ENCODE measurements at regions of chr13 and their contacts with region 1.

Region 1: GRCh38 chr13:98201984-98202383 is 24.9 kb upstream of the RNF113B start:
- DNase-seq: peak in 1 of 2 donors; percentile 28
- ATAC-seq: peak in 1 of 8 donors; percentile 45
- H3K4me3 ChIP-seq: no peak overlapping the region
- H3K27ac ChIP-seq: no peak overlapping the region
- H3K4me1 ChIP-seq: peaks cover 0 to 23% (median under 1%) of the 10 kb centered on the region in 9 donors
- H3K27me3 ChIP-seq: no peaks in the 10 kb centered on the region
- CTCF ChIP-seq: no peak

Region 2: GRCh38 chr13:98180092-98180491 is 21.9 kb before region 1 on chr13:
- intact Hi-C with region 1: loop called in 1 of 10 experiments (anchors 2 kb)
- DNase-seq: no peak
- ATAC-seq: no peak
- H3K4me3 ChIP-seq: no peak overlapping the region
- H3K27ac ChIP-seq: no peak overlapping the region
- H3K4me1 ChIP-seq: peaks cover 0 to 6% (median 1%) of the 10 kb centered on the region in 9 donors
- H3K27me3 ChIP-seq: no peaks in the 10 kb centered on the region
- CTCF ChIP-seq: no peak

Region 3: GRCh38 chr13:98427331-98427995 is 225.5 kb after region 1 on chr13:
- intact Hi-C with region 1: no loop called
- DNase-seq: no peak
- ATAC-seq: peak in 6 of 8 donors; percentile 70 to 90 (median 74)
- H3K4me3 ChIP-seq: no peak overlapping the region
- H3K27ac ChIP-seq: peak overlapping the region in 1 of 10 donors; percentile 35
- H3K4me1 ChIP-seq: peaks cover 0 to 12% (median 0%) of the 10 kb centered on the region in 9 donors
- H3K27me3 ChIP-seq: no peaks in the 10 kb centered on the region
- CTCF ChIP-seq: no peak

Measured in heart right ventricle (tissue), 16 donors.